Transverse colon (tissue), 4 donors: ENCODE measurements at regions of chr9 and their contacts with region 1.

Region 1: DNA sequence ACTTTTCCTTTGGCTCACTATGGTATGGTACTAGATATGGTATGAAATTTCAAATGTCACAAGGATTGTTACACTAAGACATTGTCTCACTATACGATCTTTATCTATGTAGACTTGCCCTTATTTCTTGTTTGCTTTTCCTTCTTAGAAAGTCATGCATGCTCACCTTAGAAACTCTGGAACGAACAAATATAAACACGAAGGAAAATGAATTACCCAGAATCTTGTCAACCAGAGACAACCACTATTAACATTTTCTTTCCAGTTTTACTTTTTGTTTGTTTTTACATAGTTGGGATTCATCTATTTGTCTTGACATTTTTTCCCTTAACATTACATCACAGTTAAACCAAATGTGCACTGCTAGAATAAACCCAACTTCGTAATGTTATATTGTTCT is 206.0 kb downstream of the MAPKAP1 start:
- DNase-seq: no peak
- H3K4me3 ChIP-seq: no peak overlapping the region
- H3K27ac ChIP-seq: no peak overlapping the region
- H3K4me1 ChIP-seq: peaks cover 0 to 11% (median 0%) of the 10 kb centered on the region in 4 donors
- H3K27me3 ChIP-seq: no peaks in the 10 kb centered on the region
- CTCF ChIP-seq: no peak
- EP300 ChIP-seq: no peak
- POLR2A ChIP-seq: no peak

Region 2: DNA sequence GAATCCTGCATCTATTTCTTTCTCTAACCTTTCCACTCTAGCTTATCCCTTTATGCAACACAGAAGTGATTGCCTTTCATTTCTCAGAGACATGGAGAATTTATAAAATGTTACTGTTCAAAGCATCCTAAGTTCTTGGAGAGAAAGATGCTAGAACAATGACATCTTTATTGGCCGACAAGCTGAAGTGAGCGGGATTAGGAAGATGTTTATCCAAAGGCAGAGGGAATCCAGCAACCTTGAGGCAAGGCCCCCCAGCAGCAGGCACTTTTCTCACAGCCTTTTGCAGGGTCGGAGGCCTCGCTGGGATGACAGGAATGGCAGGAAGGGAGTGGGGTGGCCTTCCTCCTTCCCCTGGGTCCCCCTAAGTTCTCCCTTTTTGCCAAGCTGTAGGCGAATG is 34.6 kb before region 1 on chr9:
- in situ Hi-C with region 1: no loop called
- intact Hi-C with region 1: loop called (anchors 1 kb)
- DNase-seq: no peak
- H3K4me3 ChIP-seq: no peak overlapping the region
- H3K27ac ChIP-seq: peak overlapping the region in 2 of 4 donors; percentile 9 to 22
- H3K4me1 ChIP-seq: no peaks in the 10 kb centered on the region
- H3K27me3 ChIP-seq: no peaks in the 10 kb centered on the region
- CTCF ChIP-seq: no peak
- EP300 ChIP-seq: no peak
- POLR2A ChIP-seq: no peak